GM10248 (cell line): ENCODE measurements at regions of chr2 and their contacts with region 1.

Region 1: GRCh38 chr2:131093006-131093695 is at the start of gene FAM168B:
- DNase-seq: peak; percentile 93
- CTCF ChIP-seq: no peak

Region 2: GRCh38 chr2:131105156-131105949 is 12.2 kb after region 1 on chr2 and contains the start of gene PLEKHB2:
- CTCF ChIA-PET with region 1: interaction called, 12 read pairs
- POLR2A ChIA-PET with region 1: interaction called, 5 read pairs
- DNase-seq: peak; percentile 95
- CTCF ChIP-seq: no peak

Region 3: GRCh38 chr2:131120459-131120858 is 27.3 kb after region 1 on chr2:
- CTCF ChIA-PET with region 1: no interaction called
- POLR2A ChIA-PET with region 1: no interaction called
- DNase-seq: no peak
- CTCF ChIP-seq: no peak